ENCODE measurements at regions of chr3 and their contacts with region 1.

Region 1: GRCh38 chr3:18740631-18741583 is 315.8 kb upstream of the SATB1 start:
- DNase-seq: peak in 1 of 2 donors; percentile 90
- ATAC-seq: peak; percentile 49 to 80 (median 68)
- H3K4me3 ChIP-seq: peak overlapping the region; percentile 7
- H3K4me3 Mint-ChIP-seq: peak overlapping the region; percentile 88
- H3K27ac ChIP-seq: peak overlapping the region; percentile 75
- H3K27ac Mint-ChIP-seq: peak overlapping the region; percentile 94 to 97
- H3K4me1 ChIP-seq: peaks cover 38% of the 10 kb centered on the region
- H3K4me1 Mint-ChIP-seq: peaks cover 88 to 90% of the 10 kb centered on the region in 2 donors
- H3K27me3 ChIP-seq: no peaks in the 10 kb centered on the region
- H3K27me3 Mint-ChIP-seq: no peaks in the 10 kb centered on the region
- CTCF ChIP-seq: no peak

Region 2: DNA sequence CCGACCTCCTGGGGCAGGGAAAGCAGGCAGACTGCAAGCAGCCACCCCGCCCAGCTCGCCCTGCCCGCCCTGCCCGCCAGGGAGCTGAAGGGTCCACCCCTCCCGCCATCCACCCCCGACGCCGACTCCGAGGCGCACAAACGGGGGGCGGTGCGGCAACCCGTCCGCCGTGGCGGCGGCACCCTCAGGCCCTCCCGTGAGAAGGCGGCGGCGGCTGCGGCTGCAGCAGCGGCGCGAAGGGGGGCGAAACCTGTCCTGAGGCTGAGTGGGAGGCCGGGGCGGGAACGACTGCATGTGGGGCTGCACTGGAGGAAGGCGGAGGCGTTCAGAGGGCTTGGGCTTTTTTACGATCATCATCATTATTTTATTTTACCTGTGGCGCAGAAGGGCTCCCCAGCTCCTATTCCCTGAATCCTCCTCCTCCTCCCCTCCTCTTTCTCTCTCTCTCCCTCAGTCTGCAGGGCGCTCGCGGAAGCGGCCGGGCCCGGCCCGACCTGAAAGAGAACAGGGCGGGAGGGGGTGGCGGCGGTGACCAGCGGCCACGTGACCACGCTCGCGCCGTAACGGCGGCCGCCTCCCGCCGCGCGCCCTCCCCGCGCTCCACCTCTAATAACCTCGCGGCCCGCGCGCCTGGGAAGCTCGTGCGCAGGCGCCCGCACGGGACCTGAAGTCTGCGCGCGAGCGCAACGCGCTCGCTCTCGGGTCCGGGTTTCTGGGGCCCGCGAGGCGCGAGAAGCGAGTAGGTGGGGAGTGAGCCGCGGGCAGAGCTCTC is 998.6 kb before region 1 on chr3 and contains the start of gene TBC1D5:
- intact Hi-C with region 1: loop called (anchors 5 kb)
- DNase-seq: peak; percentile 87 to 96
- ATAC-seq: peak; percentile 90 to 96 (median 91)
- H3K4me3 ChIP-seq: peak within 1 kb of the TSS; percentile 84
- H3K4me3 Mint-ChIP-seq: peak within 1 kb of the TSS; percentile 95
- H3K27ac ChIP-seq: peak within 1 kb of the TSS; percentile 85
- H3K27ac Mint-ChIP-seq: peak within 1 kb of the TSS; percentile 86 to 95
- H3K4me1 ChIP-seq: peaks cover 18% of the 10 kb centered on the region
- H3K4me1 Mint-ChIP-seq: peaks cover 40% of the 10 kb centered on the region in 2 donors
- H3K27me3 ChIP-seq: no peaks in the 10 kb centered on the region
- H3K27me3 Mint-ChIP-seq: no peaks in the 10 kb centered on the region
- CTCF ChIP-seq: no peak
- total RNA-seq, gene TBC1D5: 63.8 to 81.9 (median 74.9) TPM

Region 3: DNA sequence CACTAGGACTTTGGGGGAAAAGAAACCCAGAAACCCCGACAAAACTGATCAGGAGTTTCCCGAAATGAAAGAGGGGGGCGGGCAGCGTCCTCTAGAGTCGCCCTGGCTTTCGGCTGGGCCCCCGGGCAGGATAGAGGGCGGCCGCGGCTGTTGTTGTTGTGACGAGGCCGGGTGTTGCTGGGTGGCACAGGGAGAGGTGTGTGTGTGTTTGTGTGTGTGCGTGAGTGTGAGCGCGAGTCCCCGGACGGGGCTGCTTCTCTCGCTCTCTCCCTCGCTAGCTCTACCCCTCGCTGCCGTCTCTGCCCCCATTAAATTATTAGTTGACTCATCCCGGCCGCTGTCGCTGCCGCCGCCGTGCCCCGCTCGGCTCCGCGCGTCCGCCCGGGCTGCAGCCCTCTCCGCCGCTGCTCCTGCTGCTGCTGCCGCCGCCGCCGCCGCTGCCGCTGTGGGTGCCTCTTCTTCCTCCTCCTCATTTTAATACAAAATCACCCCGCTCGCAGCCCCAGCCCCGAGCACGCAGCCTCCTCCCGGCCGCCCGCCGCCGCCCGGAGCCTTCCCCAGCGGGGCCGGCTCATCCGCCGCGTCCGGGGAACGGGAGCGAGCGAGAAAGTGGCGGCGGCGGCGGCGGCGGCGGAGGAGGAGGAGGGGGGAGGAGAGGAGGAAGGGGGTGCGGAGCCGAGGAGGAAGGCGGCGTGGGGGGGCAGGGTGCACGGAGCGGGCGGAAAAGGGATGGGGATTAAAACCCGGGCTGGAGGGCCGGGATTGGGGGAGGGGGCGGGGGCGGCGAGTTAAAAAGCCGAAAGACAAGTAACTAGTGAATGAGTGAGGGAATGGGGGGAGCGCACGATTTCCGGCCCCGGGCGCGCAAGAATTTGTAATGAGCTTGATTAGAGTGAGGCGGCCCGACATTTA is 315.9 kb before region 1 on chr3 and contains the start of gene SATB1:
- intact Hi-C with region 1: loop called (anchors 5 kb)
- DNase-seq: peak; percentile 70 to 78
- ATAC-seq: peak; percentile 64 to 78 (median 71)
- H3K4me3 ChIP-seq: peak within 1 kb of the TSS; percentile 92
- H3K4me3 Mint-ChIP-seq: peak within 1 kb of the TSS; percentile 99
- H3K27ac ChIP-seq: peak within 1 kb of the TSS; percentile 90
- H3K27ac Mint-ChIP-seq: peak within 1 kb of the TSS; percentile 94 to 99
- H3K4me1 ChIP-seq: peaks cover 18% of the 10 kb centered on the region
- H3K4me1 Mint-ChIP-seq: peaks cover 66 to 80% of the 10 kb centered on the region in 2 donors
- H3K27me3 ChIP-seq: no peaks in the 10 kb centered on the region
- H3K27me3 Mint-ChIP-seq: no peaks in the 10 kb centered on the region
- CTCF ChIP-seq: no peak
- total RNA-seq, gene SATB1: 137 to 162 (median 151) TPM

Region 4: DNA sequence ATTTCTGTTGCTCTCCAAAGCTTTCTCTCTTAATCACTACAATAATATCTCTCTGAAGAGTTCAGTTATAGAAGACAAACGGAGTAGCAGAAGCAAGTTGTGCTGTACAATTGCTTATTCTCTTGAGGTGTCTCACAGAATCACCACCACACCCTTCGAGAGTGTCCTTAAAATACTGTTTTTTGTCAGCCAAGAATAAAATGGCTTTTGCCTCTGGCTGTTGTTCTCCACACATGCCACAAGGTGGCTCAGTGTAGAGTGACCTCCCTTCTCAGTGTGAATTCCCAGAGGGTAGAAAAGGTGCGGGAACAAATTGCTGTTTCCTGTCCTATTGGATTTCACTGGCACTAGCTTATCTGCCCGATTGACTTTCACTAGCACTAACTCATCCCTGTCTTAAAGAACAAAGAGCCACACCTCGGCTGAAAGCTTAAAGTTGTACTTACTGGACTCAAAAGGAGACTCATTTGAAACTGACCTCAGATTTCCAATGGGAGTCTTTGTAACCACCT is 181.5 kb before region 1 on chr3:
- intact Hi-C with region 1: loop called (anchors 5 kb)
- DNase-seq: peak in 1 of 2 donors; percentile 75
- ATAC-seq: peak; percentile 56 to 73 (median 65)
- H3K4me3 ChIP-seq: no peak overlapping the region
- H3K4me3 Mint-ChIP-seq: peak overlapping the region; percentile 52
- H3K27ac ChIP-seq: no peak overlapping the region
- H3K27ac Mint-ChIP-seq: peak overlapping the region; percentile 72 to 83
- H3K4me1 ChIP-seq: peaks cover 3% of the 10 kb centered on the region
- H3K4me1 Mint-ChIP-seq: peaks cover 37 to 39% of the 10 kb centered on the region in 2 donors
- H3K27me3 ChIP-seq: no peaks in the 10 kb centered on the region
- H3K27me3 Mint-ChIP-seq: no peaks in the 10 kb centered on the region
- CTCF ChIP-seq: peak; percentile 74

Region 5: DNA sequence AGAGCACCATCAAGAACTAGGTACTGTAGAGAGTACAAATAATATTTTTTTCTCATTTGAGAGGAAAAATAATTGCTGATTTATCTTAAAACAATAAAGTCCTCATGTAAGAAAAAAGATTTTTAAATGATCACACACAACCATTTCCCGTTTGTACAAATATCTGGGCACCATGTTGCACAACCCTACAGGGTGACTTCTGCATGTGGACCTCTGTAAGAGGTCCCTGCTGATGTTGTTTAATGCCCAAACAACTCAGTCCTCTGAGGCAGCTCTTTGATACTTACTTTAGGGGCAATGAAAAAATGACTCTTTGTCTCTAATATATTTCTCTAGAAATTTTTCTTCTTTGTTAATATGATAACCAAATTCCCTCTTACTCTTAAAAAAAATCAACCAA is 147.7 kb before region 1 on chr3:
- intact Hi-C with region 1: no loop called
- DNase-seq: no peak
- ATAC-seq: no peak
- H3K4me3 ChIP-seq: no peak overlapping the region
- H3K4me3 Mint-ChIP-seq: no peak overlapping the region
- H3K27ac ChIP-seq: no peak overlapping the region
- H3K27ac Mint-ChIP-seq: no peak overlapping the region
- H3K4me1 ChIP-seq: no peaks in the 10 kb centered on the region
- H3K4me1 Mint-ChIP-seq: no peaks in the 10 kb centered on the region
- H3K27me3 ChIP-seq: no peaks in the 10 kb centered on the region
- H3K27me3 Mint-ChIP-seq: peaks cover 3 to 8% of the 10 kb centered on the region in 2 donors
- CTCF ChIP-seq: no peak

Region 6: DNA sequence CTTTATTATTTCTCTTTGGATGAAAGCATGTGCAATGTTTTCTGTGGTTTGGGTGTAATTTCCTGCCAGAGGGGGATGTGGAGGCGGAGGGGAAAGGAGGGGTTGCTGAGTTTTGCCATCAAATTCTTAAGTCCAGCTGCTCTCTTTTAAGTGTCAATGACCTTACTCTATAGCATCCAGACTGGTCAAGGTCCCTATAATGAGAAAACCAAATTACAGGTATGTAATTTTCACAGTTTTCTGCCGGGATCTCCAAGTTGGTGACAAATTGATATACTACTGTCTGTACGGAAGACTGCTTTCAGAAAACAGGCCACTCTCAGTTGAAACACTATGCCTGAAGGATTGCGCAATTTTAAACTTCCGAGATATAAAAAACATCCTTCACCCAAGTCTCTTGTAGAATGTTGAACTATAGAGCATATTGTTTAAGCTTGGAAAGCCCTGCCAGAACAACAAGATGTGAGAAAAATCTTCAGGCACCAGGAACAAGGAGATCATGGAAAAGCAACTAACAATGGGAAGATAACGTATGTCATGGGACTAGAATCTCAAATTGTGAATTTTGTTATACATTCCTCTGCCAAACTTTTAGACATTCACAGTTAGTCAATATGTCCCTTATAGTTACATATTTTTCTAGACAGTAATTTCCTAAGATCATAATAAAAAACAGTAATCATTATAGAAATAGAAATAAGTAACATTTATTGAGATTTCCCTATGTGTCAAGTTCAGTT is 15.1 kb before region 1 on chr3:
- intact Hi-C with region 1: loop called (anchors 1 kb)
- DNase-seq: peak in 1 of 2 donors; percentile 72
- ATAC-seq: peak; percentile 75 to 81 (median 80)
- H3K4me3 ChIP-seq: peak overlapping the region; percentile 7
- H3K4me3 Mint-ChIP-seq: peak overlapping the region; percentile 88
- H3K27ac ChIP-seq: peak overlapping the region; percentile 77
- H3K27ac Mint-ChIP-seq: peak overlapping the region; percentile 94 to 97
- H3K4me1 ChIP-seq: peaks cover 33% of the 10 kb centered on the region
- H3K4me1 Mint-ChIP-seq: peaks cover 61 to 68% of the 10 kb centered on the region in 2 donors
- H3K27me3 ChIP-seq: no peaks in the 10 kb centered on the region
- H3K27me3 Mint-ChIP-seq: no peaks in the 10 kb centered on the region
- CTCF ChIP-seq: no peak

Region 7: DNA sequence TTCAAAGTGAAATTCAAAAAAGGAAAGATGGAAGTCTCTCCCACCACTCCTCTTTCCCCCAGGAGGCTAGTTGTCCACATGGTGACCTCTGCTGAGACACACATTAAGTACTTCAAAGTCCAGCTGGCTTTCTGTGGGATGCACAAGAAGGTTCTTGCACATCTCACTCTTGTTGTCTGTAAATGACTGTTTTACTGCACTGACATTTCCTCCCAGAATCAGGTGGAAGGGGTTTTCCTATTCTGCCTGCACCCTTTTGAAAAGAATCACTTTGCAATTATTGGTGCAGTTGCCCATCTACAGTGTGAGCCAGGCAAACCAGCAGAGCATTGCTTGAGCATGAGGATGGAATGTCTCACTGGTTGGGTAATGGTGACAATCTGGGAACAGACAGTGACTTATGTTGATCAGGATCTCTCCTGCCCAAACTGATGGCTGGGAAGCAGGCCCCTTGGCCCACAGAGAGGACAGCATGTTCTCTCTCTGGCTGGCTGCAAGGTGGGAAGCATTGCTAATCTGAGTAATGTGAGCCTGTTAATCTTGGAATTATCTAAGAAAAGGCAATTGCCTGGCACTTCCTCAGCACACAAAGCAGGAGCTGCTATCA is 31.9 kb after region 1 on chr3:
- intact Hi-C with region 1: no loop called
- DNase-seq: no peak
- ATAC-seq: no peak
- H3K4me3 ChIP-seq: no peak overlapping the region
- H3K4me3 Mint-ChIP-seq: no peak overlapping the region
- H3K27ac ChIP-seq: no peak overlapping the region
- H3K27ac Mint-ChIP-seq: no peak overlapping the region
- H3K4me1 ChIP-seq: no peaks in the 10 kb centered on the region
- H3K4me1 Mint-ChIP-seq: peaks cover 0 to 4% of the 10 kb centered on the region in 2 donors
- H3K27me3 ChIP-seq: peaks cover 2% of the 10 kb centered on the region
- H3K27me3 Mint-ChIP-seq: peaks cover 0 to 15% of the 10 kb centered on the region in 2 donors
- CTCF ChIP-seq: no peak

Region 8: DNA sequence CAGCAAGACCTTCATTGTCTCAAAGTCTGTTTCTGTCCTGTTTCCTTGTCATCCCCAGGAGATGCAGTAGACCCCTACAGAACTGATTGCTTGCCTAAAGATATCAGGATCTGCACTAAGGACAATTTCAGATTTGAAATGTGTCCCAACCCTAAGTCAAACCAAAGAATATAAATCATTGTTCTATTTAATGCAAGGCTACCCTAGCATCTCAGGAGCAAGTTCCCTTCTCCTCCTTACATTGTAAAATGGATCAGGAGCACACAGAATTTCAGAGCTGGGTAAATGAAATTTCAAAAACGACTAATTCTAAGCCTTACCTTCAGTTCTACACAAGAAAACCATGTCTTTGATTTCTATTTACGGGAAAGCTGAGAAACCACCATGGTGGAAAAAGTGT is 46.5 kb after region 1 on chr3:
- intact Hi-C with region 1: loop called (anchors 5 kb)
- DNase-seq: no peak
- ATAC-seq: peak in 1 of 3 donors; percentile 41
- H3K4me3 ChIP-seq: no peak overlapping the region
- H3K4me3 Mint-ChIP-seq: no peak overlapping the region
- H3K27ac ChIP-seq: no peak overlapping the region
- H3K27ac Mint-ChIP-seq: no peak overlapping the region
- H3K4me1 ChIP-seq: no peaks in the 10 kb centered on the region
- H3K4me1 Mint-ChIP-seq: no peaks in the 10 kb centered on the region
- H3K27me3 ChIP-seq: no peaks in the 10 kb centered on the region
- H3K27me3 Mint-ChIP-seq: no peaks in the 10 kb centered on the region
- CTCF ChIP-seq: no peak

Measured in natural killer cell (primary cell).